Dorsolateral prefrontal cortex (tissue), 120 donors: ENCODE measurements at regions of chr3 and their contacts with region 1.

Region 1: GRCh38 chr3:121126033-121126706 is 218.2 kb downstream of the STXBP5L start:
- DNase-seq: no peak
- H3K4me3 ChIP-seq: no peak overlapping the region
- H3K27ac ChIP-seq: no peak overlapping the region
- H3K27me3 ChIP-seq: no peaks in the 10 kb centered on the region
- CTCF ChIP-seq: no peak

Region 2: DNA sequence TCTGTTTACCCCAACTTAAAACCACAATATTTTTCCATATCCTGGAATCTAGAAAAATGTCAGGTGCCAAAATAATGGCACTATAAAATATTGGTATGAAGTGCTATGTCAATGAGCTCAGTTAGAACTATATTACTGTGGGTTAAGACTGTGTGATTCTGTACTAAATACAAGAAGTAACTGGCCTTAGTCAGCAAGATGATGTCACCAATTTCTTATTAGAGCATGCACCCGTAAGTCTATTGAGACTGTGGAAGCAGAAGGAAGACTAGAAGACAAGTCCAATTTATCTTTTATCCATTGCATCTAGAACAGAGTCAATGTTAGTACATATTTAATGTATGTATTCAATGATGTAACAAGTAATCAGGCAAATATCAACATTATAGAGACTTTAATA is 802.0 kb before region 1 on chr3:
- intact Hi-C with region 1: no loop called
- DNase-seq: no peak
- H3K4me3 ChIP-seq: no peak overlapping the region
- H3K27ac ChIP-seq: no peak overlapping the region
- H3K27me3 ChIP-seq: no peaks in the 10 kb centered on the region
- CTCF ChIP-seq: no peak

Region 3: GRCh38 chr3:121152573-121152972 is 26.4 kb after region 1 on chr3:
- intact Hi-C with region 1: loop called in 1 of 2 experiments (anchors 2 kb)
- DNase-seq: no peak
- H3K4me3 ChIP-seq: no peak overlapping the region
- H3K27ac ChIP-seq: no peak overlapping the region
- H3K27me3 ChIP-seq: no peaks in the 10 kb centered on the region
- CTCF ChIP-seq: no peak